ENCODE measurements at regions of chr20 and their contacts with region 1.

Region 1: DNA sequence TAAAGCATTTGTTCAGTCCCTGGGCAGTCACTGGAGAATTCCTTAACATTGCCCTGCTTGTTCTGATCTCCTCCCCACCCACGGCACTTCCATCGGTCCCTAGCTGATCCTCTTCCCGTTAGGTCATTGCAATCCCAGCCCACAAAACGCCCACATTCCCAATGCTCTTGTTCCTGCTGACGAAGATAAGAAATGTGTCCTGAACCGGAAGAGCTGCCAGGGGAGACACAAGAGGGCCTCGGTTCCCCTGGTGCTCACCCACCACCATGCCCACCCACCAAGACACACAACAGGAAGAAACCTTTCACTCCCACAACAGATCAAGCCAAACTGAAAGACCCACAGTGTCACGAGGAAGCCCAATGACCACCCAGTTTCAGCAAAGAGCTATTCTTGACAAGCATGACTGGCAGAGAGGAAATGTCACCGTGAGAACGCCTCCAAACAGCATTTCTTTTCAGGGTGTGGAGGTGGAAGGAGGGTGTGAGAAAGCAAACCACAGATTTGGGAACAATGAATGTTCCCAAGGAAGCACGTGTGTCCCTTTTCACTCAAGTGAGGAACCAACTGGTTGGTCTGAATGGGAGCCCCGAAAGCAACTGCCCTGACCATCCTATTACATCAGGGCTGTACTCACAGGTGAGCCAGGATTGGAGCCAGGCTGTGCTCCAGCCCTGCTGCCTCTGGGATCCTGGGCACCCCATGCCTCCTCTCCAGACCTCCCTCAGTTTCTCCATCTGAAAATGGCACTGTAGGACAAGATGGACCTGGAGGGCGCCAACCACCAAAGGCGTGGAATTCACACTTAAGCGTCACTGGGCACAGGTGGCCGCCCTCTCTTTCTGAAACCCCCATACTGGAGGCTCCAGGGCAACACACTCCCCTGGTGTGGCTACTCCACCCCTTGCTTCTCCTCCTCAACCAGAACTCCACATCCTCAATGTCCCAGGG is 97.5 kb downstream of the ZMYND8 start:
- DNase-seq: peak in 4 of 5 donors; percentile 62 to 83 (median 70)
- ATAC-seq: peak; percentile 68 to 84 (median 75)
- H3K4me3 ChIP-seq: no peak overlapping the region
- H3K27ac ChIP-seq: peak overlapping the region; percentile 29 to 88 (median 81)
- H3K4me1 ChIP-seq: peaks cover 0 to 60% (median 36%) of the 10 kb centered on the region in 12 donors
- H3K27me3 ChIP-seq: no peaks in the 10 kb centered on the region
- CTCF ChIP-seq: no peak
- POLR2A ChIP-seq: no peak

Region 2: DNA sequence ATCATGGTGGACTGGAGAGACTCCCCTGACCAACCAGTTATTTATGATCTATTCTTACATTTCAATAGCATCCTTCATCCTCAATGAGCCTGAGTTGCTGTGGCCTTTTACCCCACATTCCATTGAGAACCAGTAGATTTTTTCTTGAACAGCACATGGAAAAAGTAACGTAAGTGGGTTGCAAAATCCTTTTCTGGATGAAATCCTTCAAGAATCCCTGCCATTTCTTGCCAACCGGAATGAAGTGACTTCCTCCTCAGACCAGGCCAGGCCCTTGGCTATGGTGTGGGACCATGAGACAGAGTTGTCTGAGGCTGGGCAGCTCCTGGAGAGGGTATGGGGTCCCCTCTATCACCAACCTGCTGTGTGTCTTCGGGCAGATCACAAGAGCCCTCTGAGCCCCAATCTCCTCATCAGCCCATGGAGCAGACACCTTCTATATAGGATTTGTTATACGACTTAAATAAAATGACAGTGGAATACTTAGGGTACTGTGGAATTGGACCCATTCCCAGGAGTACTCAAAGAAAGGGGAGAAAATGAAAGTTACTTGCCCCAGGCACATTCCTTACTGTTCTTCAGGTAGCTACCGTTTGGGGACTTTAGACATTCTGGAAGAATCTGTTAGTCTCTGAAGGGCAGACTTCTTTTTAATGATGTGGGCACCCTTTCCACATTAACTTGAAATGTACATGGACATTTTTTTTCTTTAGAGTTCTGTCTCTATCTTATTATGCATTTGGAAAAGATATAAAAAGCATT is 353.5 kb before region 1 on chr20:
- intact Hi-C with region 1: no loop called
- DNase-seq: no peak
- ATAC-seq: no peak
- H3K4me3 ChIP-seq: no peak overlapping the region
- H3K27ac ChIP-seq: no peak overlapping the region
- H3K4me1 ChIP-seq: no peaks in the 10 kb centered on the region
- H3K27me3 ChIP-seq: peaks cover 0 to 28% (median 2%) of the 10 kb centered on the region in 9 donors
- CTCF ChIP-seq: no peak
- POLR2A ChIP-seq: no peak

Region 3: DNA sequence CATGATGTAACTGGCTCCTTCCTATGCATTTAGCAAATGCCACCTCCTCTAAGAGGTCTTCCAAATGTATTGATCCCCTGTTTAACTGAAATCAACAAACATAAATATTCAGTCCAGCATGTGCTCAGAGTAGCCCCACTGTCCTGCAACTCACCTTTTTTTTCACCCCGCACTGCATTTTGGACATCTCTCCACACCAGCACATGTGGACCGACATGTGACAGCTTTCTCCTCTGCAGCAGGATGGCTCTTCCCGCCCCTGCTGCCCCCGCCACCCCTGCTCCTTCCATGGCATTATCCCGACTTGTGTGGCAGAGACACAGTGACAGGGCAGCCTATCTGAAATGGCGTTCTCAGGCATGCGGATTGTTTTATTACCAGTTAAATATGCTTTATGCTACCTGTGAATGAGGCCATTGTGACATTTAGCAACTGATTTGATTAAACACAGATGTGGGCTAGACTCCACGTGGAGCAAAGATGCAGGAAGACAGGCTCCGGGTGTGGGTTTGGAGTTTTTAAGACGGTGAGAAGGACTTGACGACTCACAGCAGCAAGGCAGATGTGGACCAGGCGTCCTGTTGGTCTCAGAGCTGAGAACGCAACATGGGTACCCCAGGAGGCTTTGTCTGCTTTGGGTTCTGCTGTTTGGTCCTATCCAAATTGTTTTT is 203.2 kb before region 1 on chr20:
- intact Hi-C with region 1: no loop called
- DNase-seq: no peak
- ATAC-seq: no peak
- H3K4me3 ChIP-seq: no peak overlapping the region
- H3K27ac ChIP-seq: no peak overlapping the region
- H3K4me1 ChIP-seq: no peaks in the 10 kb centered on the region
- H3K27me3 ChIP-seq: peaks cover 0 to 4% (median 0%) of the 10 kb centered on the region in 9 donors
- CTCF ChIP-seq: no peak
- POLR2A ChIP-seq: no peak

Region 4: GRCh38 chr20:47191074-47191673 is 67.8 kb before region 1 on chr20:
- intact Hi-C with region 1: no loop called
- DNase-seq: no peak
- ATAC-seq: no peak
- H3K4me3 ChIP-seq: no peak overlapping the region
- H3K27ac ChIP-seq: no peak overlapping the region
- H3K4me1 ChIP-seq: peaks cover 0 to 12% (median 1%) of the 10 kb centered on the region in 12 donors
- H3K27me3 ChIP-seq: peaks cover 0 to 10% (median 0%) of the 10 kb centered on the region in 9 donors
- CTCF ChIP-seq: no peak
- POLR2A ChIP-seq: no peak

Region 5: GRCh38 chr20:47205577-47206498 is 53.2 kb before region 1 on chr20:
- intact Hi-C with region 1: loop called in 3 of 10 experiments (anchors 5 kb)
- DNase-seq: peak; percentile 43 to 84 (median 69)
- ATAC-seq: peak; percentile 40 to 83 (median 76)
- H3K4me3 ChIP-seq: no peak overlapping the region
- H3K27ac ChIP-seq: no peak overlapping the region
- H3K4me1 ChIP-seq: peaks cover 0 to 9% (median 3%) of the 10 kb centered on the region in 12 donors
- H3K27me3 ChIP-seq: no peaks in the 10 kb centered on the region
- CTCF ChIP-seq: peak; percentile 22 to 83 (median 58)
- POLR2A ChIP-seq: no peak

Region 6: DNA sequence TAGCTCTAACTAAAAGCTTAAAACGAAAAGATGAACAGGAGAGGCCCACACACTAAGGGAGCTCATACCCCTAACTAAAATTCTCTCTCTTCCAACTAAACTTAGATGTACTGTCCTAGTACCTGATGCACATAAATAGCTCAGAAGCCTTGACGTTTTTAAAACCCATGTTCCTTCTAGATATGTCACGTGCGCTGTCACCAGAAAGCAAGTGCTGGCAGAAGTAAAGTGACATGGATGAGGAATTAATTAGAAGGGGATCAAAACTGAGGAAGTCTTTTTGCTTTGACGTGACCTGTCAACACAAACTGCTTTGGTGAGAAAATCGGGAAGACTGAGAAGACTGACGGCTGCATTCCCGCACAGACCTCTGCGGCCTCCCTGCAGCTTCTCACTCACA is 45.1 kb before region 1 on chr20:
- intact Hi-C with region 1: loop called in 3 of 10 experiments (anchors 5 kb)
- DNase-seq: peak in 1 of 5 donors; percentile 48
- ATAC-seq: peak; percentile 71 to 82 (median 75)
- H3K4me3 ChIP-seq: no peak overlapping the region
- H3K27ac ChIP-seq: peak overlapping the region; percentile 29 to 83 (median 62)
- H3K4me1 ChIP-seq: peaks cover 0 to 41% (median 9%) of the 10 kb centered on the region in 12 donors
- H3K27me3 ChIP-seq: no peaks in the 10 kb centered on the region
- CTCF ChIP-seq: no peak
- POLR2A ChIP-seq: peak in 1 of 2 donors; percentile 30

Region 7: GRCh38 chr20:47487175-47487917 is 228.3 kb after region 1 on chr20:
- intact Hi-C with region 1: loop called in 1 of 10 experiments (anchors 10 kb)
- DNase-seq: no peak
- ATAC-seq: peak in 3 of 4 donors; percentile 53 to 68 (median 53)
- H3K4me3 ChIP-seq: no peak overlapping the region
- H3K27ac ChIP-seq: peak overlapping the region in 7 of 12 donors; percentile 4 to 77 (median 41)
- H3K4me1 ChIP-seq: peaks cover 0 to 49% (median 8%) of the 10 kb centered on the region in 12 donors
- H3K27me3 ChIP-seq: no peaks in the 10 kb centered on the region
- CTCF ChIP-seq: no peak
- POLR2A ChIP-seq: no peak

Measured in heart left ventricle (tissue), 16 donors.